H1 (cell line): ENCODE measurements at regions of chr6 and their contacts with region 1.

Region 1: DNA sequence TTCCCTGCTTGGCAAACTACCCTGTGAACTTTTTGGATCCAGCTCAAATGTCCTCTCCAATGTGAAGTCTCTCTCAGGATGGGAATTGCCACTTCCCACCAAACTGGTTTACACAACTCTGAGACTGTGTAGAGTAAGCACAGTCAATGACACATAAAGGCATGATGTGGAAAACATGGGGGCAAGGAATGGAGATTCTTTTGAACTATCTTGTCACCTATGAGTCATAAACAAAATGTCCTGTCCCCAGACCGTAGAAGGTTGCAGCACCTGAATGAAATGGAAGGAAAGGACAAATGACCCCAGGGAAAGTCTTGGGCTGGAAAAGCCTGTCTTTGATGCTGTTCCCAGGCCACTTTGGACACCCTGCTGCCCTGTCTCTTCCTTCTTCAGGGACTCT is 11.0 kb upstream of the KIF13A start:
- DNase-seq: no peak
- H3K4me3 ChIP-seq: no peak overlapping the region
- H3K27ac ChIP-seq: no peak overlapping the region
- H3K4me1 ChIP-seq: no peaks in the 10 kb centered on the region
- H3K27me3 ChIP-seq: no peaks in the 10 kb centered on the region
- CTCF ChIP-seq: no peak
- EP300 ChIP-seq: no peak
- POLR2A ChIP-seq: no peak
- RAD21 ChIP-seq: no peak

Region 2: GRCh38 chr6:17945111-17945510 is 53.3 kb before region 1 on chr6:
- CTCF ChIA-PET with region 1: no interaction called
- POLR2A ChIA-PET with region 1: no interaction called
- DNase-seq: no peak
- H3K4me3 ChIP-seq: no peak overlapping the region
- H3K27ac ChIP-seq: no peak overlapping the region
- H3K4me1 ChIP-seq: peaks cover 0 to 2% (median 0%) of the 10 kb centered on the region in 4 experiments; a peak in 3 of 7 replicates
- H3K27me3 ChIP-seq: no peaks in the 10 kb centered on the region
- CTCF ChIP-seq: no peak
- EP300 ChIP-seq: no peak
- POLR2A ChIP-seq: no peak
- RAD21 ChIP-seq: no peak

Region 3: GRCh38 chr6:17962436-17963031 is 35.9 kb before region 1 on chr6:
- CTCF ChIA-PET with region 1: no interaction called
- POLR2A ChIA-PET with region 1: no interaction called
- DNase-seq: no peak
- H3K4me3 ChIP-seq: no peak overlapping the region
- H3K27ac ChIP-seq: no peak overlapping the region
- H3K4me1 ChIP-seq: peaks cover 0 to 3% (median under 1%) of the 10 kb centered on the region in 4 experiments; a peak in 4 of 7 replicates
- H3K27me3 ChIP-seq: no peaks in the 10 kb centered on the region
- CTCF ChIP-seq: no peak
- EP300 ChIP-seq: no peak
- POLR2A ChIP-seq: no peak
- RAD21 ChIP-seq: no peak

Region 4: DNA sequence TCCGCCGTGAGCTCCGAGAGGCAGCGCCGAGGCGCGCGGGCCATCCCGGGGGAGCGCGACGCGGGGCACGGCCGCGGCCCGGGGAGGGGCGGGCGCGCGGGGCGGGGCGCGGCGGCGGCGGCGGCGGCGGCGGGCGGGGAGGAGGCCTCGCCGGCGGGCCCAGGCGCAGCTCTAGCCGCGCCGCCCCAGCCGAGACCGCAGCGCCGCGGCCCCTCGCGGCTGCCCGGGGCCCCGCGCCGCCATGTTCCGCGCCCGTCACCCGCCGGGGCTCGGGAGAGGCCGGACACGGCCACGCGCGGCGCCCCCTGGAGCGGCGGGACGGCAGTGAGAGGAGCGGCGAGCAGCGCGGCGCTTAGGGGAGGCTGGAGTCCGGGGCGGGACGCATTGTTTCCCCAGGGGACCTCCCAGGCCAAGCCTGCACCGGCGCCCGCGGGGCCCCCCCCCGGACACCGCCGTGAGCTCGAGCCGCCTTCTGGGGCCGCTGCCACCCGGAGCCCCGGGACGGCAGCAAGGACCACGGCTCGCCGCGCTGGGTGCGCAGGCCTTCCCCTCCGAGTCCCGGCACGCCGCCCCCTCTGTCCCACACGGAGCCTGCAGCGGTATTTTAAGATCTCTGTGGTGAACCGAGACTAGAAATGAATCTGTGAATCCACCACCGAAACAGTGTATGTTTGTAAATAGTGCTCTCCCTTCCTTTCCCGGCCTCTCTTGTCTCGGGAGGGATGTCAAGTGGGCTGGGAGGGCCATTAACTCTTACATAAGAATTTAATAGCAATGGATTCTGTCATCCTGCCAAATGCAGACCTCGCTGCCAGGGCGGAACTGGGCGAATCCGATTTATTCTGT is 10.7 kb before region 1 on chr6 and contains the start of gene KIF13A:
- CTCF ChIA-PET with region 1: interaction called, 4 read pairs
- POLR2A ChIA-PET with region 1: interaction called, 10 read pairs
- DNase-seq: peak in 1 of 2 experiments; percentile 69
- H3K4me3 ChIP-seq: peak within 1 kb of the TSS; percentile 78 to 93 (median 84)
- H3K27ac ChIP-seq: peak within 1 kb of the TSS; percentile 47; the same call in 1 of the 2 replicates
- H3K4me1 ChIP-seq: peaks cover 3 to 18% (median 8%) of the 10 kb centered on the region in 4 experiments
- H3K27me3 ChIP-seq: peaks cover 0 to 4% (median 0%) of the 10 kb centered on the region in 4 experiments; a peak in 2 of 7 replicates
- CTCF ChIP-seq: no peak
- EP300 ChIP-seq: no peak
- POLR2A ChIP-seq: peak in 1 of 2 experiments; percentile 52; a peak in 2 of 3 replicates
- RAD21 ChIP-seq: 0 out of 4 replicates have a peak, but pooled peaks of 1 of the 2 experiments have one; percentile 3
- total RNA-seq, gene KIF13A: 40.8 and 43.3 TPM in 2 replicates

Region 5: DNA sequence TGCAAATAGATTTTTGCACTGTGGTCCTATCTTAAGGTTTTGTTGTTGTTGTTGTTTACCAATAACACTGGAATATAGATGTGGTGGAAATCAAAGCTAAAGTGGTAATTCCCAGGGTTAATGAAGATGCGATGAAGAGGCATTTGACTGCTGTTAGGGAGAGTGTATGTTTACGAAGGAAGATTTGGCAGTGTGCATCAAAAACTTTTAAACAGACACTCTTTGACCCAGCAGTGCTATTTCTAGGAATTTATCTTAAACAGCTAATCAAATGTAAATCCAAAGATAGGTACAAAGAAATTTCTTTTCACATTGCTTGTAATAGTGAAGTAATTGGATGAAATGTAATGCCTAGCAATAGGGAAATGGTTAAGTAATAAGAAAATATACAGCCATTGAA is 190.7 kb after region 1 on chr6:
- CTCF ChIA-PET with region 1: no interaction called
- POLR2A ChIA-PET with region 1: no interaction called
- DNase-seq: no peak
- H3K4me3 ChIP-seq: no peak overlapping the region
- H3K27ac ChIP-seq: no peak overlapping the region
- H3K4me1 ChIP-seq: peaks cover 4 to 12% (median 10%) of the 10 kb centered on the region in 4 experiments
- H3K27me3 ChIP-seq: no peaks in the 10 kb centered on the region
- CTCF ChIP-seq: no peak
- EP300 ChIP-seq: no peak
- POLR2A ChIP-seq: no peak
- RAD21 ChIP-seq: no peak